ENCODE measurements at regions of chr13 and their contacts with region 1.

Region 1: DNA sequence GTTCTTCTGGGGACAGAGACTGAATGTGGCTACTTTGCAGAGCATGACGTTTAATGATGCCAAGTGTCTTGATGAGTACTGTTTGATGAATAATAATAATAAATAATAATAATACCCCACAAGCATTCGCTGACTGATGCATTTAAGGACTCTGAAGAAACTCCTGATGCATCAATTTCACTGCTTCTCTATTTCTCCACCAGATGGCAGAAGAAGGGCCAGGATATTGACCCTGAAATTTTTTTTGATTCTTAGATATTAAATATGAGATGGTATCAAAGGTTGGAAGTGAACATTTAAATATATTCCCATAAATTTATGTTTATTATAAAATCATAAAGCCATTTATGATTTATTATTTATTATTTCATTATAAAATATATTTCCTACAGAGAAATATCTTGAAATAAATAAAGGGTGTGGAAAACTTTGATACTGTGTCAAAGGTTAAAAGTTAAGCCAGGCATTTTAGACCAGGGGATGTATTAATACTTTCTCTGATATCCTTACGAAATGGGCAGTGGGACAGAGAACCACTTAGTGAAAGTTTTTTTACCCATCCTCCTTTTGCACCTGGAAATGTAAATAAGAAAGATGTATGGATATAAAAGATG is 170.9 kb downstream of the LACC1 start:
- DNase-seq: peak in 2 of 4 donors; percentile 23 to 48
- ATAC-seq: peak; percentile 59
- H3K4me3 ChIP-seq: no peak overlapping the region
- H3K27ac ChIP-seq: no peak overlapping the region
- H3K4me1 ChIP-seq: peaks cover 0 to 4% of the 10 kb centered on the region in 2 donors
- H3K27me3 ChIP-seq: no peaks in the 10 kb centered on the region
- CTCF ChIP-seq: peak; percentile 58 to 72

Region 2: DNA sequence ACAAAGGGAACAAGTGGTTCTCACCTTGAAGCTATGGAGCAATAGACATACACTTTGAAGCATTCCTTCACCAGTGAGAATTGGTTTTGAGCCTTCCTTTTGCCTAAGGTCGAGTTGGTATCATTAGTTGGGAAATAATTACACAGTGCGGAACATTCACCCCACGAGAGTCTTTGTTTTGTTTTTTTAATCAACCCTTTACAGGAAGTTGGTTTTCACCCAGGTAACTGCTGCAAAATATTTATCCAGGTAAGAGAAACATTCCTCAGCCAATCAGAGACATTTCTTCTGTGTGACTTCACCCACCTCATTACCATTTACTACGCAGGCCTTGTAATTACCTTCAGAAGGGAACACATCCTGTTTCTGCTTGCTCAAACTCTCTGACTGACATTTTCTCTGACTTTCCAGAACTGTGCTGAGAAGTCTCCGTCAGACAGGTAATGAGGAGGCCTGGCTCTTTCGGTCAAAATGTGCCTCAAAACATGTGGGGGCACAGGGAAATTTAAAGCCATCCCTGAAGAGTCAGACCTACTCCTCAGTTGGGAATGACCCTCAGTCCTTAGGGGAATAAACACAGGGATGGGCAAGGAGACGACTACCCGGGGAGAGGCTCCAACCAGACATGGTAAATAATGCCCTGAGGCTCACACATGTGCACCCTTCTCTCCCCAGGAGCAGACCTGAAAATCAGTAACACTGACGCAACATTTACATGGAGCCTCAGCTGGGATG is 300.4 kb after region 1 on chr13:
- intact Hi-C with region 1: no loop called
- DNase-seq: peak in 1 of 4 donors; percentile 35
- ATAC-seq: peak; percentile 93
- H3K4me3 ChIP-seq: no peak overlapping the region
- H3K27ac ChIP-seq: peak overlapping the region; percentile 65 to 79
- H3K4me1 ChIP-seq: no peaks in the 10 kb centered on the region
- H3K27me3 ChIP-seq: no peaks in the 10 kb centered on the region
- CTCF ChIP-seq: no peak

Region 3: GRCh38 chr13:44364348-44365049 is 313.9 kb after region 1 on chr13:
- intact Hi-C with region 1: no loop called
- DNase-seq: no peak
- ATAC-seq: no peak
- H3K4me3 ChIP-seq: no peak overlapping the region
- H3K27ac ChIP-seq: no peak overlapping the region
- H3K4me1 ChIP-seq: peaks cover 0 to 3% of the 10 kb centered on the region in 2 donors
- H3K27me3 ChIP-seq: no peaks in the 10 kb centered on the region
- CTCF ChIP-seq: no peak

Region 4: DNA sequence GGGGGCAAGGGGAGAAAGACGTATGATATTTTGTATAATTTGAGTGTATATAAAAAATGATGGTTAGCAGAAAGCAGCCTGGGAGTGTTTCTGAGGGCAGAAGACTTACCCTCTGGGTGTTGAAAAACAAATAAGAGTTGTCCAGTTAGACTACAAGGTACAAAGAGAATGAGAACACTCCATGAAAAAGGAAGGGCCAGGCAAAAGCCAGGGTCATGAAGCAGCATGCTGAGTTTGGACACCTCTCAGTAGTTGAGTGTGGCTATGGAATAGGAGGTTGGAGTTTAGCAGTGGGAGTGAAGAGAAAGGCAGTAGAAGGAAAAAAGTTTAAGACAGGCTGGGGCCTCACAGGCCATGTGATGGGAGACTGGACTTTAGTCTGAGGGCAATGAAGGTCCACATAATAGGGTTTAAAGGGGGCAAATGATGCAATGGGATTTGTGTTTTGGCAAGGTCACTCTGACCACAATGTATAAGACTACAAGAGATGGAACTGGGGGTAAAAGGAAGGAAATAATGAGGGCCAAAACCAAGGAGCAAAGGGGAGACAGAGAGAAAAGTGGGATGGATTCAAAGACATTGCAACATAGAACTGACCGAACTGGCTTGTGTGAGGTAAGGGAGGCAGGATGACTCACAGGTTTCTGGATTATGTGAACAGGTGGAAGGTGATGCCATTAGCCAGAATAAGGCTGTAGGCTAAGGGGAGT is 399.6 kb after region 1 on chr13:
- intact Hi-C with region 1: loop called (anchors 10 kb)
- DNase-seq: no peak
- ATAC-seq: peak; percentile 65
- H3K4me3 ChIP-seq: no peak overlapping the region
- H3K27ac ChIP-seq: no peak overlapping the region
- H3K4me1 ChIP-seq: no peaks in the 10 kb centered on the region
- H3K27me3 ChIP-seq: no peaks in the 10 kb centered on the region
- CTCF ChIP-seq: no peak